ENCODE measurements at regions of chr20 and their contacts with region 1.

Region 1: GRCh38 chr20:43408848-43409576 is 48.7 kb upstream of the SRSF6 start:
- DNase-seq: no peak
- H3K4me3 ChIP-seq: no peak overlapping the region
- H3K4me3 Mint-ChIP-seq: no peak overlapping the region
- H3K27ac ChIP-seq: no peak overlapping the region
- H3K27ac Mint-ChIP-seq: no peak overlapping the region
- H3K4me1 ChIP-seq: no peaks in the 10 kb centered on the region
- H3K4me1 Mint-ChIP-seq: no peaks in the 10 kb centered on the region
- H3K27me3 ChIP-seq: no peaks in the 10 kb centered on the region
- H3K27me3 Mint-ChIP-seq: peaks cover 38 to 41% of the 10 kb centered on the region in 2 donors

Region 2: GRCh38 chr20:41738604-41739206 is 1670.3 kb before region 1 on chr20:
- CTCF ChIA-PET with region 1: interaction called, 7 read pairs
- POLR2A ChIA-PET with region 1: no interaction called
- intact Hi-C with region 1: loop called (anchors 5 kb)
- DNase-seq: peak in 3 of 5 donors; percentile 11 to 25 (median 18)
- H3K4me3 ChIP-seq: no peak overlapping the region
- H3K4me3 Mint-ChIP-seq: no peak overlapping the region
- H3K27ac ChIP-seq: no peak overlapping the region
- H3K27ac Mint-ChIP-seq: no peak overlapping the region
- H3K4me1 ChIP-seq: no peaks in the 10 kb centered on the region
- H3K4me1 Mint-ChIP-seq: peaks cover 0 to 2% (median 0%) of the 10 kb centered on the region in 4 donors
- H3K27me3 ChIP-seq: no peaks in the 10 kb centered on the region
- H3K27me3 Mint-ChIP-seq: peaks cover 0 to 2% of the 10 kb centered on the region in 2 donors

Region 3: DNA sequence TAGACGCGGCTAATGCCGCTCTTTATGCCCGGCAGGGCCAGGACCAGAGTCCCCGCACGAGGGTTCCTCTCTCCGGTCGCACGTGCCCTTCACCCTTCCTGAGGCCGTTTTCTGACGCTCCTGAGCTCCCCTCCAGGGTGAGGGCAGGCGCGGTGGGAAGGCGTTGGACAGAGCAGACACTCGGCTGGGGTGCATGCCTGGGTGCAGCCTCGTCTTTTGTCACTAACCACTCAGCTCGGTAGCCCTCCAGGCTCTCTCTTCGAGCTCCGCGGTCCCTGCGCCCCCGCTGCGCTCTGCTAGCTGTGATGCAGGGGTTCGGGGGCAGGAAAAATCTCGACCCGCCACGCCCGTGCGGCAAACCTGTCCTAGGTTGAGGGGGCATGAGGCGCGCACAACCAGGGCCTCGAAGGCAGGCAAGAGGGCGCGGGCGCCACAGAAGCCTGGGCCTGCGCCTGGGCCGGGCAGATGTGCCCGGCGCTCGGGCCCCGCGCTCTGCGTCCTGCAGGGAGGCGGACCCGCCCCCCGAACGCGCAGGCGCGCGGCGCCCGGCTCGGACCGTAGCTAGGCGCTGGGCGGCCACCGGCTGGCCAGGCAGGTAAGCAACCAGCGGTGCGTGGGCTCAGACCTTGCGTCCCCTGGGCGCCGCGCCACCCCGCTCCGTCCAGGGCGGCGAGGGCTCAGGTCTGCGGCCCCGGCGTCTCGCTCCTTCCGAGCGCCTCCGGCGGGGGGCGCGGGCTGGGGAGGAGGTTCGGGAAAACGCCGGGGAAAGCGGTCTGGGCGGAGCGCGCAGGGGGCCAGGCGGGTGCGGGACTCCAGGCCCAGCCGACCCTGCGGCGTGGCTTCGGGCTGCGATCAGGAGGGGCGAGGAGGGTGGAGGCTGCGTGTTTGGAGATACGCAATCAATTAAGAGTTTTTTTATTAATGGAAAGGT is 98.4 kb after region 1 on chr20 and contains the start of gene L3MBTL1:
- CTCF ChIA-PET with region 1: no interaction called
- POLR2A ChIA-PET with region 1: no interaction called
- intact Hi-C with region 1: no loop called
- DNase-seq: no peak
- H3K4me3 ChIP-seq: peak within 1 kb of the TSS in 1 of 2 donors; percentile 16
- H3K4me3 Mint-ChIP-seq: peak within 1 kb of the TSS; percentile 54 to 79 (median 70)
- H3K27ac ChIP-seq: no peak within 1 kb of the TSS
- H3K27ac Mint-ChIP-seq: peak within 1 kb of the TSS in 1 of 7 donors; percentile 15
- H3K4me1 ChIP-seq: peaks cover 11% of the 10 kb centered on the region
- H3K4me1 Mint-ChIP-seq: peaks cover 0 to 9% (median 2%) of the 10 kb centered on the region in 4 donors
- H3K27me3 ChIP-seq: peaks cover 18% of the 10 kb centered on the region
- H3K27me3 Mint-ChIP-seq: peaks cover 28 to 29% of the 10 kb centered on the region in 2 donors
- total RNA-seq, gene L3MBTL1: 18.3 to 22.5 TPM